ENCODE measurements at regions of chr7 and their contacts with region 1.

Region 1: GRCh38 chr7:150356265-150356897 is 12.2 kb upstream of the REPIN1 start:
- DNase-seq: peak in 7 of 9 donors; percentile 32 to 59 (median 53)
- ATAC-seq: peak; percentile 59
- H3K4me3 ChIP-seq: no peak overlapping the region
- H3K4me3 Mint-ChIP-seq: peak overlapping the region in 4 of 10 donors; percentile 12 to 32 (median 22)
- H3K27ac ChIP-seq: peak overlapping the region; percentile 51
- H3K27ac Mint-ChIP-seq: peak overlapping the region in 6 of 9 donors; percentile 32 to 77 (median 36)
- H3K4me1 ChIP-seq: peaks cover 6 to 28% of the 10 kb centered on the region in 2 donors
- H3K4me1 Mint-ChIP-seq: peaks cover 17 to 43% (median 41%) of the 10 kb centered on the region in 7 donors
- H3K27me3 ChIP-seq: no peaks in the 10 kb centered on the region
- H3K27me3 Mint-ChIP-seq: peaks cover 0 to 10% (median 0%) of the 10 kb centered on the region in 5 donors

Region 2: GRCh38 chr7:150322833-150323681 is 33.3 kb before region 1 on chr7 and contains the starts of genes ACTR3C and LRRC61:
- CTCF ChIA-PET with region 1: no interaction called
- POLR2A ChIA-PET with region 1: no interaction called
- intact Hi-C with region 1: loop called in 1 of 2 experiments (anchors 5 kb)
- DNase-seq: peak; percentile 23 to 75 (median 41)
- ATAC-seq: peak; percentile 67
- H3K4me3 ChIP-seq: peak within 1 kb of the TSS; percentile 95
- H3K4me3 Mint-ChIP-seq: peak within 1 kb of the TSS; percentile 88 to 100 (median 98)
- H3K27ac ChIP-seq: peak within 1 kb of the TSS; percentile 85
- H3K27ac Mint-ChIP-seq: peak within 1 kb of the TSS; percentile 94 to 99 (median 98)
- H3K4me1 ChIP-seq: peaks cover 5 to 21% of the 10 kb centered on the region in 2 donors
- H3K4me1 Mint-ChIP-seq: peaks cover 25 to 57% (median 44%) of the 10 kb centered on the region in 7 donors
- H3K27me3 ChIP-seq: no peaks in the 10 kb centered on the region
- H3K27me3 Mint-ChIP-seq: no peaks in the 10 kb centered on the region
- total RNA-seq, gene ACTR3C: 7.0 to 13.2 (median 10.6) TPM
- total RNA-seq, gene LRRC61: 8.3 to 30.0 (median 11.5) TPM

Region 3: GRCh38 chr7:150368096-150368883 is 11.9 kb after region 1 on chr7 and contains the start of gene REPIN1:
- CTCF ChIA-PET with region 1: interaction called, 6 read pairs
- POLR2A ChIA-PET with region 1: interaction called, 31 read pairs
- intact Hi-C with region 1: loop called (anchors 1 kb)
- DNase-seq: peak; percentile 65 to 88 (median 80)
- ATAC-seq: peak; percentile 74
- H3K4me3 ChIP-seq: peak within 1 kb of the TSS; percentile 99
- H3K4me3 Mint-ChIP-seq: peak within 1 kb of the TSS; percentile 91 to 97 (median 95)
- H3K27ac ChIP-seq: peak within 1 kb of the TSS; percentile 83
- H3K27ac Mint-ChIP-seq: peak within 1 kb of the TSS; percentile 88 to 97 (median 95)
- H3K4me1 ChIP-seq: peaks cover 11 to 39% of the 10 kb centered on the region in 2 donors
- H3K4me1 Mint-ChIP-seq: peaks cover 24 to 67% (median 58%) of the 10 kb centered on the region in 7 donors
- H3K27me3 ChIP-seq: no peaks in the 10 kb centered on the region
- H3K27me3 Mint-ChIP-seq: no peaks in the 10 kb centered on the region
- total RNA-seq, gene REPIN1: 68.5 to 103 (median 79.7) TPM

Region 4: DNA sequence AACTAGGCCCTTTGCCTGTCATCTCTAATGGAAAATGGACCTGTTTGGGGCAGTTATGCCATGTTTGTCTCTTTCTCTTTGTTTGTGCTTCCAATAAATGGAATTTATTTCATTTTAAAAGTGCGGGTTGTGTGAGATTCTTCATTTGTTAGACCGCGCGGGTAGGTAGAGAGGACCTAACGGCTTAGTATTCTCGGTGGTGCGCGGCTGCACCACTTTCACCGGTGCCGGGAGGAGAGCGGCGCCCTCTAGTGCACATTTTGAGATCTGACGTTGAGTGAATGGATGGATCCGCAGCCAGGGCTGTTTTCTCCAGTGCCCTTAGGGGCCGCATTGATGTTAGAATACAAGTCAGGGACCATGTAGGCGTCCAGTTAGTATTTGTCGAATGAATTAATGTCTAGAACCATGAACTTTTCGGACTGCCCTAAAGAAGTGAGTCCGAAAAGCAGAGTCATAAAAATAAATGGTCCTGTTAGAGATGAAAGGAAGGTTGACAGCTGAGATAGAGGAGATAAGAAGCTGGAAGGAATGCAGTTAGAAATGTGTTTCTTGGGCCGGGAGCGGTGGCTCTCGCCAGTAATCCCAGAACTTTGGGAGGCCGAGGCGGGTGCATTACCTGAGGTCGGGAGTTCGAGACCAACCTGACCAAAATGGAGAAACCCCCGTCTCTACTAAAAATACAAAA is 64.8 kb after region 1 on chr7:
- CTCF ChIA-PET with region 1: interaction called, 4 read pairs
- POLR2A ChIA-PET with region 1: interaction called, 3 read pairs
- intact Hi-C with region 1: loop called (anchors 1 kb)
- DNase-seq: peak; percentile 65 to 87 (median 81)
- ATAC-seq: peak; percentile 99
- H3K4me3 ChIP-seq: no peak overlapping the region
- H3K4me3 Mint-ChIP-seq: peak overlapping the region; percentile 16 to 75 (median 52)
- H3K27ac ChIP-seq: no peak overlapping the region
- H3K27ac Mint-ChIP-seq: peak overlapping the region in 7 of 9 donors; percentile 18 to 78 (median 45)
- H3K4me1 ChIP-seq: peaks cover 3 to 4% of the 10 kb centered on the region in 2 donors
- H3K4me1 Mint-ChIP-seq: peaks cover 5 to 17% (median 8%) of the 10 kb centered on the region in 7 donors
- H3K27me3 ChIP-seq: no peaks in the 10 kb centered on the region
- H3K27me3 Mint-ChIP-seq: peaks cover 0 to 6% (median 0%) of the 10 kb centered on the region in 5 donors

Measured in naive thymus-derived CD4-positive, alpha-beta T cell (primary cell).